ENCODE measurements at regions of chr2 and their contacts with region 1.

Region 1: DNA sequence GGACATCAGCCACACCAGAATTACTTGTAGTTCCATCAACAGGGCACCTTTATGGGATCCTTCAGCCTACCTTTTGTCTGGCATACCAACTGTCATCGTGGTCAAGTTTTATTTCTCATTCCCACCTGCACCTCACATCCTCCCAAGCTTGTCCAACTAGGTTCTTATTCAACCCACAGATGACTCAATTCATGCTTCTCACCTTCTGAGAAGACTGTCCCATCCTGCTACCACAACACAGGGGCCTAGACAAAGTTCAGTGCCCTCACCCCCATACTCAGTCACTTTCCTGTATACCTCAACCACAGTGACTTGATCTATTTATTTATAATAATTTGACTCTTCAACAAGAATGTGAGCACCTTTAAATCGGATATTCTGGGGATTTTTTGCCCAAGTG is 114.4 kb upstream of the ACVR1C start:
- DNase-seq: no peak
- H3K4me3 ChIP-seq: no peak overlapping the region
- H3K27ac ChIP-seq: no peak overlapping the region
- H3K4me1 ChIP-seq: no peaks in the 10 kb centered on the region
- H3K27me3 ChIP-seq: no peaks in the 10 kb centered on the region
- CTCF ChIP-seq: no peak

Region 2: DNA sequence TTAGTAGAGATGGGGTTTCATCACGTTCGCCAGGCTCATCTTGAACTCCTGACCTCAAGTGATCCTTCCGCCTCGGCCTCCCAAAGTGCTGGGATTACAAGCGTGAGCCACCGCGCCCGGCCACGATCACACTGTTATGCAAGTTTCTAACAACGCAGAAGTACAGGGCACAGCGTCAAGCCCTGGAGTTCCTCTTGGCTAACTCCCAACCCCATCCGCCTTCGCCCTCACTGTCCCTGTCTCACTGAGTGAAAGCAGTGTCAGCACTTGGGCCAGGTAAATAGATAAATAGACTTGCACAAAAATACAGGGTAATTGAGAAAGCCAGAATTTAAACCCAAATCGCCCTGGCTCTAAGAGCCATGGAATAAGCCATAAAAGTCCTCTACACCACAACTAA is 21.3 kb after region 1 on chr2:
- CTCF ChIA-PET with region 1: no interaction called
- POLR2A ChIA-PET with region 1: interaction called, 11 read pairs
- intact Hi-C with region 1: no loop called
- DNase-seq: no peak
- H3K4me3 ChIP-seq: no peak overlapping the region
- H3K27ac ChIP-seq: no peak overlapping the region
- H3K4me1 ChIP-seq: no peaks in the 10 kb centered on the region
- H3K27me3 ChIP-seq: no peaks in the 10 kb centered on the region
- CTCF ChIP-seq: no peak